ENCODE measurements at regions of chr1 and their contacts with region 1.

Region 1: DNA sequence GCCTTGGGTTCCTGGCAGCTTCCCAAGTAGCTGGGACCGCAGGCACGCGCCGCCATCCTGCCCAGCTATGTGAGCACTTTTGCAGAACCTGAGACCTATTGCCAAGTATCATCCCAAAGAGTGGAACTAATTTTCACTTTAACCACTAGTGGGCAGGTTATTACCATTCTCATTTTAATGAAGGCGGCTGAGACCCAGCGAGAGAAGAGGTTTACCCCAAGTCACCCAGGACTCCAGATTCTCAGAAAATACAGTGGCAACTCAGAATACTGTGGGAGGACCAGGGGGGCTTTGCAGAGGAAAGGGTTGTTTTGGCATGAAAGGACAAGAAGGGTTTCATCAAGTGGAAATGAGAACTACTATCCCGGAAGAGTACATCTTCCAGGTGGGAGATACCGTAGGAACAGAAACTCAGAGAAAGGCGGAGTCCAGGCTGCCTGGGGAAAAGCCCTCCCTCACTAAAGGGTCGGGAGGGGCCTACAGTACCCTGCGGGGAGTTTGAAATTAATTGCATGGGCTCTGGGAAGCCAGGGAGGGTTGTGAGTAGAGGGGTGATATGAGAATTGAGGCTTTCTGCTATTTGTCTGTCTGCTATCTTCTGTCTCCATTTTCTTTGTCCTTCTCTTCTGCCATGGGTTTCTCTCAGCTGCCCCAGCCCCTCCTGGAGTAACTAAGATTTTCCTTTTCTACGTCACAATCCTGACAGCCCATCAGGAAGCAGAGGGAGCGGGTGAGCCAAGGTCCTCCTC is 7.2 kb upstream of the SEMA4A start:
- DNase-seq: peak in 5 of 9 experiments; percentile 37 to 83 (median 44)
- ATAC-seq: peak; percentile 84
- H3K4me3 ChIP-seq: no peak overlapping the region
- H3K4me3 Mint-ChIP-seq: peak overlapping the region; percentile 60
- H3K27ac ChIP-seq: no peak overlapping the region
- H3K27ac Mint-ChIP-seq: peak overlapping the region; percentile 32
- H3K4me1 ChIP-seq: peaks cover 19% of the 10 kb centered on the region
- H3K4me1 Mint-ChIP-seq: peaks cover 20% of the 10 kb centered on the region
- H3K27me3 ChIP-seq: no peaks in the 10 kb centered on the region
- H3K27me3 Mint-ChIP-seq: no peaks in the 10 kb centered on the region
- CTCF ChIP-seq: peak; percentile 72

Region 2: DNA sequence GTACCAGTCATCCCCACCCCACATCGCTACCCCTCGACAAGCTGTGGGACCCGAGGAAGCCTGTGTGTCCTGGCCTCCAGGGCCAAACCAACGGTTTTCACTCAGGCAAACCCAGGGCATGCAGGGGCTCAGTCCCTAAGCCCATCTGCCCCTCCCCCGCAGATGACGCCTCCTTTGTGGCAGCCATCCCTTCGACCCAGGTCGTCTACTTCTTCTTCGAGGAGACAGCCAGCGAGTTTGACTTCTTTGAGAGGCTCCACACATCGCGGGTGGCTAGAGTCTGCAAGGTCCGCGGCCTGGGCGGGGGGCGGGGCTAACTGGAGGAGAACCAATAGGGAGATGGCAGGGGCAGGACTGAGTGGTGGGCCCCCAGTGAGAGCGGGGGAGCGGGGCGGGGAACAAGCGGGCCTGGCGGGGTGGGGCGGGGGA is 14.6 kb after region 1 on chr1:
- CTCF ChIA-PET with region 1: interaction called, 7 read pairs
- POLR2A ChIA-PET with region 1: no interaction called
- intact Hi-C with region 1: loop called in 1 of 2 experiments (anchors 1 kb)
- DNase-seq: peak in 8 of 9 experiments; percentile 38 to 77 (median 66)
- ATAC-seq: peak; percentile 91
- H3K4me3 ChIP-seq: peak overlapping the region; percentile 41 to 51
- H3K4me3 Mint-ChIP-seq: peak overlapping the region; percentile 83
- H3K27ac ChIP-seq: no peak overlapping the region
- H3K27ac Mint-ChIP-seq: peak overlapping the region; percentile 72
- H3K4me1 ChIP-seq: peaks cover 4% of the 10 kb centered on the region
- H3K4me1 Mint-ChIP-seq: peaks cover 29% of the 10 kb centered on the region
- H3K27me3 ChIP-seq: no peaks in the 10 kb centered on the region
- H3K27me3 Mint-ChIP-seq: no peaks in the 10 kb centered on the region
- CTCF ChIP-seq: no peak

Region 3: GRCh38 chr1:156212833-156213643 is 66.8 kb after region 1 on chr1 and contains the start of gene PMF1:
- CTCF ChIA-PET with region 1: interaction called, 20 read pairs
- POLR2A ChIA-PET with region 1: interaction called, 6 read pairs
- intact Hi-C with region 1: no loop called
- DNase-seq: peak; percentile 89 to 97 (median 95)
- ATAC-seq: peak; percentile 95
- H3K4me3 ChIP-seq: peak within 1 kb of the TSS; percentile 70 to 79
- H3K4me3 Mint-ChIP-seq: peak within 1 kb of the TSS; percentile 97
- H3K27ac ChIP-seq: peak within 1 kb of the TSS; percentile 92 to 95
- H3K27ac Mint-ChIP-seq: peak within 1 kb of the TSS; percentile 99
- H3K4me1 ChIP-seq: peaks cover 24% of the 10 kb centered on the region
- H3K4me1 Mint-ChIP-seq: peaks cover 31% of the 10 kb centered on the region
- H3K27me3 ChIP-seq: no peaks in the 10 kb centered on the region
- H3K27me3 Mint-ChIP-seq: no peaks in the 10 kb centered on the region
- CTCF ChIP-seq: no peak
- total RNA-seq, gene PMF1: 72.1 to 74.4 TPM

Region 4: GRCh38 chr1:156319664-156320063 is 173.5 kb after region 1 on chr1:
- CTCF ChIA-PET with region 1: no interaction called
- POLR2A ChIA-PET with region 1: no interaction called
- intact Hi-C with region 1: loop called (anchors 1 to 2 kb)
- DNase-seq: peak in 3 of 9 experiments; percentile 10 to 49 (median 36)
- ATAC-seq: no peak
- H3K4me3 ChIP-seq: no peak overlapping the region
- H3K4me3 Mint-ChIP-seq: no peak overlapping the region
- H3K27ac ChIP-seq: no peak overlapping the region
- H3K27ac Mint-ChIP-seq: no peak overlapping the region
- H3K4me1 ChIP-seq: no peaks in the 10 kb centered on the region
- H3K4me1 Mint-ChIP-seq: no peaks in the 10 kb centered on the region
- H3K27me3 ChIP-seq: no peaks in the 10 kb centered on the region
- H3K27me3 Mint-ChIP-seq: no peaks in the 10 kb centered on the region
- CTCF ChIP-seq: peak; percentile 54

Region 5: DNA sequence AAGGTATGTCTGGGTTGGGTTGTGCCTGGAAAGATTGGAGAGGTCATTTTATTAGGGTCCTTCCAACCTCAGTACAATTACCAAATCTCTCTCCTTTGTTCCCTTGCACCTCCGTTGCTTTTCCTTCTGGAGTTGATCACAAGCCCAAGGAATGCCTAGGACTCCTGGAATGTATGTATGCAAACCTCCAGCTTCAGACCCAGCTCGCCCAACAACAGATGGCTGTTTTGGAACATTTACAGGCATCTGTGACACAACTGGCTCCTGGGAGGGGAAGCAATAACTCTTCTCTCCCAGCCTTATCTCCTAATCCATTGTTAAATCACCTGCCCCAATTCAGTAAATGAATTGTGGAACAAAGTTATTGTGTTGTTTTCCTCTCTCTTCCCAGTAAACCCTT is 200.4 kb after region 1 on chr1:
- CTCF ChIA-PET with region 1: no interaction called
- POLR2A ChIA-PET with region 1: no interaction called
- intact Hi-C with region 1: no loop called
- DNase-seq: no peak
- ATAC-seq: no peak
- H3K4me3 ChIP-seq: no peak overlapping the region
- H3K4me3 Mint-ChIP-seq: no peak overlapping the region
- H3K27ac ChIP-seq: no peak overlapping the region
- H3K27ac Mint-ChIP-seq: no peak overlapping the region
- H3K4me1 ChIP-seq: no peaks in the 10 kb centered on the region
- H3K4me1 Mint-ChIP-seq: no peaks in the 10 kb centered on the region
- H3K27me3 ChIP-seq: peaks cover 3 to 4% of the 10 kb centered on the region in 2 experiments
- H3K27me3 Mint-ChIP-seq: peaks cover 12% of the 10 kb centered on the region
- CTCF ChIP-seq: no peak

Measured in CD8-positive, alpha-beta T cell (primary cell).